ENCODE measurements at regions of chr10 and their contacts with region 1.

Region 1: GRCh38 chr10:86472061-86472460 is 49.5 kb downstream of the WAPL start:
- DNase-seq: no peak
- ATAC-seq: no peak
- H3K4me3 ChIP-seq: no peak overlapping the region
- H3K27ac ChIP-seq: no peak overlapping the region
- H3K4me1 ChIP-seq: no peaks in the 10 kb centered on the region
- H3K27me3 ChIP-seq: no peaks in the 10 kb centered on the region
- CTCF ChIP-seq: no peak
- EP300 ChIP-seq: no peak
- POLR2A ChIP-seq: no peak
- RAD21 ChIP-seq: no peak

Region 2: GRCh38 chr10:86355571-86356038 is 116.5 kb before region 1 on chr10:
- CTCF ChIA-PET with region 1: no interaction called
- POLR2A ChIA-PET with region 1: no interaction called
- in situ Hi-C with region 1: no loop called
- intact Hi-C with region 1: no loop called
- DNase-seq: no peak
- ATAC-seq: no peak
- H3K4me3 ChIP-seq: no peak overlapping the region
- H3K27ac ChIP-seq: no peak overlapping the region
- H3K4me1 ChIP-seq: peaks cover 1% of the 10 kb centered on the region
- H3K27me3 ChIP-seq: peaks cover 7 to 36% of the 10 kb centered on the region in 2 experiments; a peak in 3 of 5 replicates
- CTCF ChIP-seq: no peak
- EP300 ChIP-seq: no peak
- POLR2A ChIP-seq: no peak
- RAD21 ChIP-seq: no peak

Region 3: GRCh38 chr10:86411281-86411841 is 60.7 kb before region 1 on chr10:
- CTCF ChIA-PET with region 1: no interaction called
- POLR2A ChIA-PET with region 1: no interaction called
- in situ Hi-C with region 1: no loop called
- intact Hi-C with region 1: no loop called
- DNase-seq: peak; percentile 58
- ATAC-seq: peak; percentile 82
- H3K4me3 ChIP-seq: peak overlapping the region in 1 of 3 experiments; percentile 15; a peak in 1 of 6 replicates
- H3K27ac ChIP-seq: peak overlapping the region; percentile 64
- H3K4me1 ChIP-seq: peaks cover 37% of the 10 kb centered on the region
- H3K27me3 ChIP-seq: no peaks in the 10 kb centered on the region
- CTCF ChIP-seq: no peak
- EP300 ChIP-seq: peak in 1 of 2 experiments; percentile 25; a peak in 1 of 4 replicates
- POLR2A ChIP-seq: no peak
- RAD21 ChIP-seq: no peak

Region 4: GRCh38 chr10:86506499-86506898 is 34.4 kb after region 1 on chr10:
- CTCF ChIA-PET with region 1: no interaction called
- POLR2A ChIA-PET with region 1: no interaction called
- in situ Hi-C with region 1: no loop called
- intact Hi-C with region 1: loop called (anchors 2 kb)
- DNase-seq: no peak
- ATAC-seq: no peak
- H3K4me3 ChIP-seq: no peak overlapping the region
- H3K27ac ChIP-seq: no peak overlapping the region
- H3K4me1 ChIP-seq: no peaks in the 10 kb centered on the region; the same call in 1 of the 2 replicates
- H3K27me3 ChIP-seq: no peaks in the 10 kb centered on the region
- CTCF ChIP-seq: no peak
- EP300 ChIP-seq: no peak
- POLR2A ChIP-seq: no peak
- RAD21 ChIP-seq: no peak

Measured in HepG2 (cell line).